ENCODE measurements at regions of chr13 and their contacts with region 1.

Region 1: GRCh38 chr13:74287724-74288169 is 153.5 kb upstream of the KLF12 start:
- DNase-seq: peak; percentile 84
- ATAC-seq: peak; percentile 66
- H3K4me3 Mint-ChIP-seq: peak overlapping the region; percentile 59
- H3K27ac Mint-ChIP-seq: peak overlapping the region; percentile 71
- H3K4me1 Mint-ChIP-seq: peaks cover 38% of the 10 kb centered on the region
- H3K27me3 Mint-ChIP-seq: no peaks in the 10 kb centered on the region

Region 2: DNA sequence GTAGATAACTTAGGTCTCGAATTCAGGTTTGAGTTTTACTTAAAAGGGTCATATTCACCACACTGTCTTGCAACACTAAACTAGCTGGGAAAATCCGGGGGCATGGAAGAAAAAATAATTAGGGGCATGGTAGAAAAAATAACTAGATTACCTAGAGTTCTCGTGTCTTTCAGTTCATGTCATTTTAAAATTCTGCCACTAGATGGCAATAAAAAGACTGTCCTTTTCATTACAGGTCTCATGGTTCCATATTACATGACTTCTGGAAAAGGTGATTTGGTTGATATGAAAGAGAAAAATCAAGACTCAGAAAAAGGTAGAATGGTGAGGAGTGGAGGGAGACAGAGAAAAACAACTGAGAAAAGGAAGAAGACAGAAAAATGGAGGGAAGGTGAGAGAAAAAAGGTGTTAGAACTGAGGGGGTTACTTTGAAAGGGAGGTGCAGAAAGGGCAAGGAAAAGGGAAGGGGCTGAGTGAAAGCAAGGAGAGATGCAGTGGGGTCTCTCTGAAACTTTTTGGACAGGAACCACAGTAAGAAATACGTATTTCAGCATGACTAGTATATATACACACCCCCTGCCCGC is 452.5 kb before region 1 on chr13:
- CTCF ChIA-PET with region 1: interaction called, 34 read pairs
- DNase-seq: no peak
- ATAC-seq: no peak
- H3K4me3 Mint-ChIP-seq: no peak overlapping the region
- H3K27ac Mint-ChIP-seq: no peak overlapping the region
- H3K4me1 Mint-ChIP-seq: peaks cover 1% of the 10 kb centered on the region
- H3K27me3 Mint-ChIP-seq: no peaks in the 10 kb centered on the region

Region 3: GRCh38 chr13:74062933-74063332 is 224.8 kb before region 1 on chr13:
- CTCF ChIA-PET with region 1: interaction called, 10 read pairs
- DNase-seq: peak; percentile 68
- ATAC-seq: peak; percentile 83
- H3K4me3 Mint-ChIP-seq: peak overlapping the region; percentile 80
- H3K27ac Mint-ChIP-seq: peak overlapping the region; percentile 98
- H3K4me1 Mint-ChIP-seq: peaks cover 67% of the 10 kb centered on the region
- H3K27me3 Mint-ChIP-seq: no peaks in the 10 kb centered on the region

Region 4: DNA sequence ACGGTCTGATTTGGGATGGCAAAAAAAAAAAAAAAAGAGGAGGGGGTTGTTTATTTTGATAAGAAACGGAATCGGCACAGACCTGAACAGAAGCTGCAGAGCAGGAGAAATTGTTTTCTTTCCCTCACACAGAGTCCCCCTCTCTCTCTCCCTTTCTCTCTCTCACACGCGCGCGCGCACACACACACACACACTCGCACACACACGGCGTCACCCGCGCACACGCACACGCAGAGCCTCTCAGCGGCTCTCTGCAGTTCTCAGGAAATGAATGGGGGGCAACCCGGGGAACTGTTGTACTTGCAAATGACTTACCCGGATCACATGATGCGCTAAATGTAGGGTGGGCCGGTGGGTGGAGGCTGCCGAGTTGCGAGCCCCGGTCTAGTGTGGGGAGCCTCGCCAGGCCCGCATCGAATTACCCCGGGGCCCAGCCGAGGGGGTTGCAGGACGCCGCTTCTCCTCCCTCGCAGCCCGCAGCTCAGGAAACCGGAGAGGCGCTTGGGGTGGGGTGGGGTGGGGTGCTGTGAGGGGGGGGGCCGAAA is 154.0 kb before region 1 on chr13:
- CTCF ChIA-PET with region 1: interaction called, 30 read pairs
- DNase-seq: peak; percentile 95
- ATAC-seq: peak; percentile 62
- H3K4me3 Mint-ChIP-seq: no peak overlapping the region
- H3K27ac Mint-ChIP-seq: peak overlapping the region; percentile 99
- H3K4me1 Mint-ChIP-seq: peaks cover 28% of the 10 kb centered on the region
- H3K27me3 Mint-ChIP-seq: no peaks in the 10 kb centered on the region

Region 5: DNA sequence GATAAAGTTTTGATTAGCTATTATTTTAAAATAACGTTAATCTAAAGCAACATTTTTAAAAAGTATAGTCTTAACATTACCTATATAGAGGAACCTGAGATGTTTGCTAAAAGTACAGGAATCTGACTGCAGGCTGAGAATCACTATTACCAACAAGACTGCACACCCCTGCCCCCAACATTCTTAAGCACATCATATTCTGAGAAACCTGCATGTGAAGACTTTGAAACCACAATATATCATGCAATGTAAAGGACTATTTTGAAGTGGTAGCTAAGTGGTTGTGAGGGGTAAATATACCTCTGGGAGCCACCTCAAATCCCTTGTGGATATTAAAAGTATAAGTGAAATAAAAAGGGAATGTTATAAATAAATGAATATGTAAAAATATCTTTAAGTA is 34.6 kb before region 1 on chr13:
- CTCF ChIA-PET with region 1: interaction called, 10 read pairs
- DNase-seq: no peak
- ATAC-seq: peak; percentile 58
- H3K4me3 Mint-ChIP-seq: no peak overlapping the region
- H3K27ac Mint-ChIP-seq: no peak overlapping the region
- H3K4me1 Mint-ChIP-seq: peaks cover 47% of the 10 kb centered on the region
- H3K27me3 Mint-ChIP-seq: no peaks in the 10 kb centered on the region

Region 6: DNA sequence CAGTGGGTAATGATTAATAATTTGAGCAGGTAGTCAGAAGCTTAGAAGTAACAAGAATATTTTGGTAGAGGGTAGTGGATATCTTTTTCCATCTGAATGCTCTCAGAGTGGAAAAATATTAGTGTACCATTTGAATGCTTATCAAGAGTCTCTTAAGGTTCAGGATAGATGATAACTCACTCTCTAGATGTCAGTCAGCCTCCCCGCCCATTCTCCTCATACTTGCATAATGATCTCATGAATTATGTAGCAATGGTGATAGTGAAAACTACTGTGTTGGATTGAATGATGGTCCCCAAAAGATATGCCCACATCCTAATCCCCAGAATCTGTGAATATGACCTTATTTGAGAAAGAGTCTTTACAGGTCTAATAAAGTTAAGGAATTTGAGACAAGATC is 20.9 kb before region 1 on chr13:
- CTCF ChIA-PET with region 1: interaction called, 14 read pairs
- DNase-seq: no peak
- ATAC-seq: no peak
- H3K4me3 Mint-ChIP-seq: no peak overlapping the region
- H3K27ac Mint-ChIP-seq: no peak overlapping the region
- H3K4me1 Mint-ChIP-seq: no peaks in the 10 kb centered on the region
- H3K27me3 Mint-ChIP-seq: no peaks in the 10 kb centered on the region

Region 7: GRCh38 chr13:75219479-75220237 is 931.9 kb after region 1 on chr13:
- CTCF ChIA-PET with region 1: interaction called, 14 read pairs
- DNase-seq: peak; percentile 84
- ATAC-seq: peak; percentile 98
- H3K4me3 Mint-ChIP-seq: peak overlapping the region; percentile 12
- H3K27ac Mint-ChIP-seq: no peak overlapping the region
- H3K4me1 Mint-ChIP-seq: peaks cover 8% of the 10 kb centered on the region
- H3K27me3 Mint-ChIP-seq: peaks cover 23% of the 10 kb centered on the region

Measured in activated CD8-positive, alpha-beta memory T cell treated with anti-CD3 and anti-CD28 coated beads, Interleukin-2, amount 10 ng/mL, durations not matched to agents 7 days and 5 days (primary cell).